ENCODE measurements at regions of chr12 and their contacts with region 1.

Region 1: GRCh38 chr12:42482445-42483237 is 106.9 kb downstream of the PRICKLE1 start:
- DNase-seq: peak; percentile 63
- ATAC-seq: peak; percentile 86
- H3K4me3 Mint-ChIP-seq: peak overlapping the region; percentile 67
- H3K27ac Mint-ChIP-seq: no peak overlapping the region
- H3K4me1 Mint-ChIP-seq: peaks cover 6% of the 10 kb centered on the region
- H3K27me3 Mint-ChIP-seq: peaks cover 66% of the 10 kb centered on the region
- CTCF ChIP-seq: peak; percentile 92

Region 2: GRCh38 chr12:42469355-42470175 is 13.1 kb before region 1 on chr12:
- CTCF ChIA-PET with region 1: interaction called, 12 read pairs
- POLR2A ChIA-PET with region 1: interaction called, 3 read pairs
- intact Hi-C with region 1: no loop called
- DNase-seq: peak; percentile 9
- ATAC-seq: peak; percentile 88
- H3K4me3 Mint-ChIP-seq: peak overlapping the region; percentile 57
- H3K27ac Mint-ChIP-seq: no peak overlapping the region
- H3K4me1 Mint-ChIP-seq: peaks cover 14% of the 10 kb centered on the region
- H3K27me3 Mint-ChIP-seq: peaks cover 21% of the 10 kb centered on the region
- CTCF ChIP-seq: no peak

Region 3: GRCh38 chr12:42568952-42569915 is 86.6 kb after region 1 on chr12:
- CTCF ChIA-PET with region 1: interaction called, 12 read pairs
- POLR2A ChIA-PET with region 1: no interaction called
- intact Hi-C with region 1: loop called (anchors 5 kb)
- DNase-seq: no peak
- ATAC-seq: no peak
- H3K4me3 Mint-ChIP-seq: no peak overlapping the region
- H3K27ac Mint-ChIP-seq: no peak overlapping the region
- H3K4me1 Mint-ChIP-seq: no peaks in the 10 kb centered on the region
- H3K27me3 Mint-ChIP-seq: peaks cover 3% of the 10 kb centered on the region
- CTCF ChIP-seq: peak; percentile 45

Measured in activated CD8-positive, alpha-beta T cell treated with anti-CD3 and anti-CD28 coated beads for 36 hours (primary cell).